ENCODE measurements at regions of chr19 and their contacts with region 1.

Region 1: DNA sequence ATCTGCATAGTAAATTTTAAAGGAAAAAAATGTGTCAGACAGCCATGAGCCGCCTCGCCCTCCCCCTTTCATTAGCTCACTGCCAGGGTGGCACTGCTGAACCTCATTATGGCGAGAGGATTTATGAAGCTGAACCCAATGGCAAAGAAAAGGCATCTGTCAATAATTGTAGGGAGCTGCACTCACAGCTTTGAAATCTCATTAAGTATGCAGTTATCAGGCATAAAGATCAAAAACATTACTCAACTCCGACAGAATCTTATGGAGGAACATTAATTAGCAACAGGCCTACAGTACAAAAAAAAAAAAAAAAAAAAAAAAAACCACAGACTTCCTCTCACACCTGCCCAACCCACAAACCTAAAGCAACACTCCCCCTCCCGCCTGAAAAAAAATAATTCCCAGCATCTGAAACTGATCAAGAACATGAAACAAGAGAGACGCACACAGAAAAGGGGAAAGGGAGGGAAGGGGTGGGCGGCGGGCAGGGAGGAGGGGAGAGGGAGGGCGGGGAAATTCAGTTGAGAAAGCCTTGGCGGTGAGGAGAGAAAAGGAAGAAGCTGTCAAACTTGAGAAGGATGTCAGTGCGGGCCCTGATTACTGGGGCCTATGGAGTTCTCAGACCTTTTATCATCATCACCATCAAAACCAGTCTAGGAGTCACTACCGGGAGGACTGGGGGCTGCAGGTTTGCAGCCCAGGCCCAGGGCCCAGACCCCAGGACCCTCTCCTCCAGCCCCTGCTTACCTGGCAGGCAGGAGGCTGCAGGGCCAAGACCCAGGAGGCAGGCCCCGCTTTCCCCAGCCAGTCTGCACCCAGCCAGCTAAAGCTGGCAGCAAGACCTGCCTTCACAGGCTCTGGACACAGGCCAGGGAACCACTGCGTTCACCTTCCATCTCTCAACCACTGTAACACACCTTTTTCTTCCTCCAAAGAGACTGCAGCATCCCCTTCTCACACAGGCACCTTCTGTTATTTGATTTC is 8.9 kb downstream of the TSHZ3 start:
- DNase-seq: peak; percentile 59
- H3K4me3 ChIP-seq: no peak overlapping the region
- H3K27me3 ChIP-seq: no peaks in the 10 kb centered on the region
- CTCF ChIP-seq: no peak

Region 2: GRCh38 chr19:31177246-31177645 is 163.1 kb before region 1 on chr19:
- CTCF ChIA-PET with region 1: no interaction called
- POLR2A ChIA-PET with region 1: no interaction called
- DNase-seq: no peak
- H3K4me3 ChIP-seq: no peak overlapping the region
- H3K27me3 ChIP-seq: peaks cover 6% of the 10 kb centered on the region; the same call in 1 of the 2 replicates
- CTCF ChIP-seq: no peak

Region 3: DNA sequence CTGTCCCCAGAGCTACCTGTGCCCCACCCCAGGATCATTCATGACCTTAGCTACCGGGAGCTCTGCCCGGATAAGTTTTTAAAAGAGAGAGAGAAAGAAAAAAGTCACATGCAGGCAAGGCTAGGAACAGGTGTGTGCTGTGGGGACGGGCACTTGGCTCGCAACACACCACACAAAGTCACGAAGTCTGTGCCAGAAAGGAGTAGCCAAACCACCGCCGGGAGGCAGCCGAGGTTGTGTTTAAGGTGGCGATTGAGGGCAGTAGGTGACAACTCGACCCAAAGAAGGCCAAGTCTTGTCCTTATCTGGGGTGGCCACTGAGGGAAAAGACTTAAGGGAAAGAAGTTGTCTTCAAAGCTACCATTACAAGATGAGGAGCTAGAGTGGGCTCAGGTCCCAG is 13.5 kb after region 1 on chr19:
- CTCF ChIA-PET with region 1: no interaction called
- POLR2A ChIA-PET with region 1: no interaction called
- DNase-seq: no peak
- H3K4me3 ChIP-seq: no peak overlapping the region
- H3K27me3 ChIP-seq: no peaks in the 10 kb centered on the region; the same call in 1 of the 2 replicates
- CTCF ChIP-seq: no peak

Region 4: DNA sequence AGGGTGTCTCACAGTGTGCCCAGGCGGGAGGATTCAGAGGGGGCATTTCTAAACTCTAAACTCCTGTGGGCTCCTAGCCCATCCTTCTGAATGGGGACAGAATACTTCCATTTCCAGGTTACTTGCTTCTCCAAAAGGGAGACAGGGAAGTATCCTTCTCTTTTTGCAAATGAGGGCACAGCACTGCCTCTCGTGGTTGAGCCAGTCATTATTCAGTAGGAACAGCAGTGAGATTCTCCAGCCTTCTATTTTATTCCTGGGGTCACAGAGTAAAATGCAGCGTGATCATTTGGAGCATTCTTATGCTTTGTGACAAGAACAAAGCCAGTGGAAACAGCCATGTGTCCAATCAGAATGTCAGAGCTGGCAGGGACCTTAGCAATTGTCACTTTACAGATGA is 24.6 kb after region 1 on chr19:
- CTCF ChIA-PET with region 1: no interaction called
- POLR2A ChIA-PET with region 1: interaction called, 10 read pairs
- DNase-seq: no peak
- H3K4me3 ChIP-seq: no peak overlapping the region
- H3K27me3 ChIP-seq: no peaks in the 10 kb centered on the region
- CTCF ChIP-seq: no peak

Measured in BJ (cell line).